H1 (cell line): ENCODE measurements at regions of chr19 and their contacts with region 1.

Region 1: DNA sequence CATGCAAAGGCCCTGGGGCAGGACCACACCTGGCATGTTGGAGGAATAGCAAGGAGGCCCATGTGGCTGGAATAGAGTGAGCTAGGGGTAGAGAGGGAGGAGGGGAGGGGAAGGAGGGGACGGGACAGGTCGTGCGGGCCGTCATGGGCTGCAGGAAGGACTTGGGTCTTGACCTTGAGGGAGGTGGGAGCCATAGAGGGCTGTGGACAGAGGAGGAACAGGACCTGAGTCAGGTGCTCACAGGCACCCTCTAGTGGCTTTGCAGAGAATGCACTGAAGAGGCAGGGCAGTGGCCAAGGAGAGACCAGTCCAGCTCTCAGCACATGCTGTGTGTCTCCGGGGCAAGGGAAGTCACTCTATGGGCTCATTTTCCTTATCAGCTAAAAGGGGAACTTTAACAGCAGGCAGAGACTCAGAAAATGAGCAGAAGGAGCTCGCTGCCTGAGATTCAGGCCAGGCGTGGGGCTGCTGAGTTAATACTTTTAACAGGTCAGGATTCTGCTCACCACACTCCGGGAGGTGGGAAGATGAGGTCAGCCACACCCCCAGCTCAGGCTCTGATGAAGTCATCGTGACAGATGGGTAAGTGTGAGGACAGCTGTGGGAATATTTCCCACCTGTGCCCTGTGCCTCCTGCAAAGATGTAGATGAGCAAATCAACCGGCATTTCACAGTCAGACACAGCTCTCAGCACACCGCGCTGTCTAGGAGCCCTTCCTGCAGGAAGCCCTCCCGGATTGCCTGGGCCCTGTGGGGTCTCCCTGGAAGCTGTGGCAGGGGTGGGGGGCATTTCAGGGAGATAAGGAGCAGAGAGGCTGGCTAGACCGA is 6.0 kb upstream of the TNFAIP8L1 start:
- DNase-seq: peak in 1 of 2 experiments; percentile 84
- H3K4me3 ChIP-seq: no peak overlapping the region
- H3K27ac ChIP-seq: no peak overlapping the region
- H3K4me1 ChIP-seq: peaks cover 0 to 7% (median 2%) of the 10 kb centered on the region in 4 experiments; a peak in 2 of 7 replicates
- H3K27me3 ChIP-seq: peaks cover 0 to 13% (median 11%) of the 10 kb centered on the region in 4 experiments; a peak in 5 of 7 replicates
- CTCF ChIP-seq: peak; percentile 82 to 99 (median 99)
- EP300 ChIP-seq: no peak
- POLR2A ChIP-seq: no peak
- RAD21 ChIP-seq: peak; percentile 61 to 63

Region 2: GRCh38 chr19:4534836-4535658 is 98.3 kb before region 1 on chr19 and contains the start of gene PLIN5:
- CTCF ChIA-PET with region 1: interaction called, 23 read pairs
- POLR2A ChIA-PET with region 1: interaction called, 8 read pairs
- DNase-seq: peak; percentile 54 to 99
- H3K4me3 ChIP-seq: peak within 1 kb of the TSS in 3 of 4 experiments; percentile 12 to 53 (median 16); a peak in 5 of 8 replicates
- H3K27ac ChIP-seq: no peak within 1 kb of the TSS
- H3K4me1 ChIP-seq: peaks cover 0 to 13% (median 5%) of the 10 kb centered on the region in 4 experiments; a peak in 5 of 7 replicates
- H3K27me3 ChIP-seq: peaks cover 0 to 19% (median 15%) of the 10 kb centered on the region in 4 experiments; a peak in 4 of 7 replicates
- CTCF ChIP-seq: peak in 2 of 3 experiments; percentile 0 to 8; a peak in 2 of 4 replicates
- EP300 ChIP-seq: no peak
- POLR2A ChIP-seq: peak in 1 of 2 experiments; percentile 86; a peak in 2 of 3 replicates
- RAD21 ChIP-seq: peak in 1 of 2 experiments; percentile 3; a peak in 1 of 4 replicates
- total RNA-seq, gene PLIN5: 1.8 and 2.0 TPM in 2 replicates

Region 3: GRCh38 chr19:4557971-4558941 is 75.1 kb before region 1 on chr19:
- CTCF ChIA-PET with region 1: interaction called, 23 read pairs
- POLR2A ChIA-PET with region 1: no interaction called
- DNase-seq: peak in 1 of 2 experiments; percentile 92
- H3K4me3 ChIP-seq: no peak overlapping the region
- H3K27ac ChIP-seq: no peak overlapping the region
- H3K4me1 ChIP-seq: peaks cover 0 to 7% (median 3%) of the 10 kb centered on the region in 4 experiments; a peak in 3 of 7 replicates
- H3K27me3 ChIP-seq: no peaks in the 10 kb centered on the region
- CTCF ChIP-seq: peak; percentile 82 to 94 (median 85)
- EP300 ChIP-seq: no peak
- POLR2A ChIP-seq: no peak
- RAD21 ChIP-seq: peak; percentile 48 to 58

Region 4: DNA sequence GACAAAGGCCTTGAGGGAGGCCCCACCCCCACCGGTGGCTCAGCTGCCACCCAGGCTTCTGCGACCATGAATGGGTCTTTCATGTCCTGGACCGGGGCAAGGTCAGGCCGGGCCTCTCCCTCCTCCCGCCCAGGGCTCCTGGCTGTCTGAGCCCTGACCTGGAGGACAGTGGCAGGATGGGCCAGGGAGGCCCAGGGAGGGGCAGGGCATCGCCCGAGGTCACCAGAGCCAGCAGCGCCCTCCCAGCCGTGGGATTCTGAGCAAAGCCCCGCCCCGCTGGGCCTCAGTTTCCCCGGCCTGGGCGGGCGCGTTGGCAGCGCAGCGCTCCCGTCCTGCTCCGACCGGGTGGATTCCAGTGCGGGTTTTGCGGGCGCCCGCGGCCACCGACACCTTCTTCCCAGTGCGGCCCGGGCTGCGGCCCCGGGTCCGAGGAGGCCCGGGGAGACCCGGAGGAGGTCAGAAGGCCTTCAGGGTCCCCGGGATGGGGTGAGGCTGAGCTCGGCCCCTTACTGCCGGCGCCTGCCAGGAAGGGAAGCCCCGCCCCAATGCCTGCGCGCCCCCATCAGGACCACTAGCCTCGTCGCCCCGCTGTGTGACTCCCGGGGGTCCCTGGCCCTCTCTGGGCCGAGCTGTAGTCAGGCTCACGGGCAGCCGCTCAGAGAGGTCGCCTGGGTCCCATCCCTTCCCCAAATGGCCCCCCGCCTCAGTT is 49.2 kb before region 1 on chr19:
- CTCF ChIA-PET with region 1: interaction called, 49 read pairs
- POLR2A ChIA-PET with region 1: interaction called, 3 read pairs
- DNase-seq: peak in 1 of 2 experiments; percentile 95
- H3K4me3 ChIP-seq: peak overlapping the region; percentile 38 to 77 (median 67)
- H3K27ac ChIP-seq: no peak overlapping the region
- H3K4me1 ChIP-seq: peaks cover 0 to 8% (median 5%) of the 10 kb centered on the region in 4 experiments; a peak in 6 of 7 replicates
- H3K27me3 ChIP-seq: peaks cover 0 to 12% (median 8%) of the 10 kb centered on the region in 4 experiments; a peak in 4 of 7 replicates
- CTCF ChIP-seq: no peak
- EP300 ChIP-seq: no peak
- POLR2A ChIP-seq: 0 out of 3 replicates have a peak, but pooled peaks of 1 of the 2 experiments have one; percentile 11
- RAD21 ChIP-seq: no peak

Region 5: GRCh38 chr19:4597975-4598671 is 35.2 kb before region 1 on chr19:
- CTCF ChIA-PET with region 1: interaction called, 27 read pairs
- POLR2A ChIA-PET with region 1: interaction called, 3 read pairs
- DNase-seq: peak in 1 of 2 experiments; percentile 91
- H3K4me3 ChIP-seq: peak overlapping the region; percentile 52 to 70 (median 54)
- H3K27ac ChIP-seq: no peak overlapping the region
- H3K4me1 ChIP-seq: peaks cover 0 to 9% (median 4%) of the 10 kb centered on the region in 4 experiments; a peak in 5 of 7 replicates
- H3K27me3 ChIP-seq: peaks cover 3 to 9% (median 8%) of the 10 kb centered on the region in 4 experiments; a peak in 6 of 7 replicates
- CTCF ChIP-seq: 0 out of 4 replicates have a peak, but pooled peaks of 1 of the 3 experiments have one; percentile 0
- EP300 ChIP-seq: no peak
- POLR2A ChIP-seq: no peak
- RAD21 ChIP-seq: no peak

Region 6: GRCh38 chr19:4618019-4618418 is 15.3 kb before region 1 on chr19:
- CTCF ChIA-PET with region 1: interaction called, 54 read pairs
- POLR2A ChIA-PET with region 1: interaction called, 5 read pairs
- DNase-seq: no peak
- H3K4me3 ChIP-seq: no peak overlapping the region
- H3K27ac ChIP-seq: no peak overlapping the region
- H3K4me1 ChIP-seq: peaks cover 0 to 3% (median 0%) of the 10 kb centered on the region in 4 experiments; a peak in 4 of 7 replicates
- H3K27me3 ChIP-seq: peaks cover 0 to 2% (median 0%) of the 10 kb centered on the region in 4 experiments; a peak in 2 of 7 replicates
- CTCF ChIP-seq: no peak
- EP300 ChIP-seq: no peak
- POLR2A ChIP-seq: no peak
- RAD21 ChIP-seq: no peak